ENCODE measurements at regions of chr16 and their contacts with region 1.

Region 1: GRCh38 chr16:27401768-27402568 is at the start of gene IL21R:
- DNase-seq: peak; percentile 94
- ATAC-seq: peak; percentile 60
- H3K4me3 Mint-ChIP-seq: peak within 1 kb of the TSS; percentile 99
- H3K27ac Mint-ChIP-seq: peak within 1 kb of the TSS; percentile 97
- H3K4me1 Mint-ChIP-seq: peaks cover 38% of the 10 kb centered on the region
- H3K27me3 Mint-ChIP-seq: no peaks in the 10 kb centered on the region
- total RNA-seq, gene IL21R: 61.8 to 73.5 TPM

Region 2: DNA sequence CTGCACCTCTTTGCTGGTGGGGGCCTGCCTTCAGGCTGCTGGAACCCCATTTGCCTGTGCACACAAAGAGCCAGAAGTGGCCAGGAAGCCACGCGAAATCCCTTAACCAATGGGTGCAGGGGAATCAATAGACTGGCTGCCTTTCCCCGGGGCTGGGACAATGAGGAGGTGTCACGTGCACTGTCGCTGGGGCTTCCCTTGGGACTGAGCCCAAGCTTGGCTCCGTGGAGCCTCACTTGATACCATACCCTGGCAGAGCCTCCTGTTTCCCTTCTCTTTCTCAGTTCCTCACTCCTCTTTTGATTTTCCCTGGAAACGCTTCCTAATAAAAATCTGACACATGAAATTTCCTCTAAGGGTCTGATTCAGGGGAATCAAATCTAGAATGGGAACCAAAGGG is 374.0 kb before region 1 on chr16:
- CTCF ChIA-PET with region 1: no interaction called
- POLR2A ChIA-PET with region 1: no interaction called
- intact Hi-C with region 1: no loop called
- DNase-seq: no peak
- ATAC-seq: no peak
- H3K4me3 Mint-ChIP-seq: no peak overlapping the region
- H3K27ac Mint-ChIP-seq: no peak overlapping the region
- H3K4me1 Mint-ChIP-seq: no peaks in the 10 kb centered on the region
- H3K27me3 Mint-ChIP-seq: peaks cover 4% of the 10 kb centered on the region

Region 3: DNA sequence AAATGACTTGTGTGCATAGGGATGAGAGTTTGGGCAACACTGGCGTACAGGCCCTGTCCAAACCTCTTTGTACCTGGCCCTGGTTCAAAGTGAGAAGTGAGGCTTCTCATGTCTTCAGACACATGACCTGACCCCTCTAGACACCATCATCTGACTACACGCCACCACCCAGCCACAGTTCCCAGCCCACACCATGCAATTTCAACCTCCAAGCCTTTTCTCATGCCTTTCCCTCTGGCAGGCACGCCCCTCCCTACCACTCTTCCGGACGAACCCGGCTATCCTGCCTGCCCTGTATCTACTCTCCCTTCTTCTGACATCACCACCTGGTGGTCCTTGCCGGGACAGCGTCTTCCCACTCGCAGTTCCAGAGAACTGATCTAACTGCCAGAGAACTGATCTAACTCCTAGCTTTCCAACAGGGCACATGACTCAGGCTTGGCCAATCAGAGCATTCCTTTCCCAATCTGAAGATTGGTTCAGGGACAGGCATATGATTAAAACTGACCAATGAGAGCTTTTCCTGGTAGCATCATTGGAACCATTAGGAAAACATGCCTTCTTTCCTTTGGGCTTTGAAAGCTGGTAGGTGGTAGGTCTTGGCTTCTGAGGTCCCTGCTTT is 27.1 kb before region 1 on chr16:
- CTCF ChIA-PET with region 1: interaction called, 51 read pairs
- POLR2A ChIA-PET with region 1: interaction called, 31 read pairs
- intact Hi-C with region 1: loop called (anchors 1 to 2 kb)
- DNase-seq: peak; percentile 81
- ATAC-seq: peak; percentile 48
- H3K4me3 Mint-ChIP-seq: no peak overlapping the region
- H3K27ac Mint-ChIP-seq: no peak overlapping the region
- H3K4me1 Mint-ChIP-seq: peaks cover 50% of the 10 kb centered on the region
- H3K27me3 Mint-ChIP-seq: no peaks in the 10 kb centered on the region

Region 4: GRCh38 chr16:27387724-27388123 is 14.2 kb before region 1 on chr16:
- CTCF ChIA-PET with region 1: interaction called, 12 read pairs
- POLR2A ChIA-PET with region 1: interaction called, 8 read pairs
- intact Hi-C with region 1: loop called in 1 of 2 experiments (anchors 1 kb)
- DNase-seq: no peak
- ATAC-seq: peak; percentile 95
- H3K4me3 Mint-ChIP-seq: no peak overlapping the region
- H3K27ac Mint-ChIP-seq: peak overlapping the region; percentile 7
- H3K4me1 Mint-ChIP-seq: peaks cover 13% of the 10 kb centered on the region
- H3K27me3 Mint-ChIP-seq: no peaks in the 10 kb centered on the region

Region 5: GRCh38 chr16:27426423-27427408 is 24.7 kb after region 1 on chr16:
- CTCF ChIA-PET with region 1: interaction called, 11 read pairs
- POLR2A ChIA-PET with region 1: interaction called, 4 read pairs
- intact Hi-C with region 1: loop called (anchors 2 kb)
- DNase-seq: peak; percentile 90
- ATAC-seq: peak; percentile 94
- H3K4me3 Mint-ChIP-seq: peak overlapping the region; percentile 43
- H3K27ac Mint-ChIP-seq: peak overlapping the region; percentile 92
- H3K4me1 Mint-ChIP-seq: peaks cover 82% of the 10 kb centered on the region
- H3K27me3 Mint-ChIP-seq: no peaks in the 10 kb centered on the region

Region 6: DNA sequence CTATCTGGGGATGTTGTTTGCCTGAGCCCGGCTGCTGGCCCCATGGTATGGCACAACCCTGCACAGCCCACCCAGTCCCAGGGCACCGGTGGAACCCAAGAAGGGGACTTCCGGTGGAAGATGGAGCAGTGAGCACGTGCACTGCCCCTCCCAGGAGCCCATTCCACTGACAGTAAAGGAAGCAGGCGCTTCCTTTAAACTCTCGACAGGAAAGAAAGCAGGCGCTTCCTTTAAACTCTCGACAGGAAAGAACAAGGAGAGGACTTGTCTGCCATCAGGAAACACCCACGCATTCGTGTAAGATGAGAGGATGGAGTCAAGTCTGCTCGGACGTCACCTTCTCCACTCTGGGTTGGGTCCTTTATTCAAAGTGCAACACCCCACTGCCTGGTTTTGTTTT is 53.7 kb after region 1 on chr16:
- CTCF ChIA-PET with region 1: interaction called, 5 read pairs
- POLR2A ChIA-PET with region 1: interaction called, 6 read pairs
- intact Hi-C with region 1: loop called (anchors 2 kb)
- DNase-seq: peak; percentile 58
- ATAC-seq: no peak
- H3K4me3 Mint-ChIP-seq: no peak overlapping the region
- H3K27ac Mint-ChIP-seq: peak overlapping the region; percentile 86
- H3K4me1 Mint-ChIP-seq: peaks cover 58% of the 10 kb centered on the region
- H3K27me3 Mint-ChIP-seq: no peaks in the 10 kb centered on the region

Region 7: GRCh38 chr16:28193530-28194423 is 791.8 kb after region 1 on chr16:
- CTCF ChIA-PET with region 1: no interaction called
- POLR2A ChIA-PET with region 1: no interaction called
- intact Hi-C with region 1: loop called in 1 of 2 experiments (anchors 10 kb)
- DNase-seq: peak; percentile 78
- ATAC-seq: peak; percentile 67
- H3K4me3 Mint-ChIP-seq: peak overlapping the region; percentile 66
- H3K27ac Mint-ChIP-seq: peak overlapping the region; percentile 92
- H3K4me1 Mint-ChIP-seq: peaks cover 81% of the 10 kb centered on the region
- H3K27me3 Mint-ChIP-seq: no peaks in the 10 kb centered on the region

Measured in activated CD4-positive, alpha-beta T cell treated with anti-CD3 and anti-CD28 coated beads for 36 hours (primary cell).